Activated CD4-positive, alpha-beta T cell treated with anti-CD3 and anti-CD28 coated beads, Interleukin-2, amount 10 ng/mL, durations not matched to agents 24 days and 14 days (primary cell): ENCODE measurements at regions of chr9 and their contacts with region 1.

Region 1: DNA sequence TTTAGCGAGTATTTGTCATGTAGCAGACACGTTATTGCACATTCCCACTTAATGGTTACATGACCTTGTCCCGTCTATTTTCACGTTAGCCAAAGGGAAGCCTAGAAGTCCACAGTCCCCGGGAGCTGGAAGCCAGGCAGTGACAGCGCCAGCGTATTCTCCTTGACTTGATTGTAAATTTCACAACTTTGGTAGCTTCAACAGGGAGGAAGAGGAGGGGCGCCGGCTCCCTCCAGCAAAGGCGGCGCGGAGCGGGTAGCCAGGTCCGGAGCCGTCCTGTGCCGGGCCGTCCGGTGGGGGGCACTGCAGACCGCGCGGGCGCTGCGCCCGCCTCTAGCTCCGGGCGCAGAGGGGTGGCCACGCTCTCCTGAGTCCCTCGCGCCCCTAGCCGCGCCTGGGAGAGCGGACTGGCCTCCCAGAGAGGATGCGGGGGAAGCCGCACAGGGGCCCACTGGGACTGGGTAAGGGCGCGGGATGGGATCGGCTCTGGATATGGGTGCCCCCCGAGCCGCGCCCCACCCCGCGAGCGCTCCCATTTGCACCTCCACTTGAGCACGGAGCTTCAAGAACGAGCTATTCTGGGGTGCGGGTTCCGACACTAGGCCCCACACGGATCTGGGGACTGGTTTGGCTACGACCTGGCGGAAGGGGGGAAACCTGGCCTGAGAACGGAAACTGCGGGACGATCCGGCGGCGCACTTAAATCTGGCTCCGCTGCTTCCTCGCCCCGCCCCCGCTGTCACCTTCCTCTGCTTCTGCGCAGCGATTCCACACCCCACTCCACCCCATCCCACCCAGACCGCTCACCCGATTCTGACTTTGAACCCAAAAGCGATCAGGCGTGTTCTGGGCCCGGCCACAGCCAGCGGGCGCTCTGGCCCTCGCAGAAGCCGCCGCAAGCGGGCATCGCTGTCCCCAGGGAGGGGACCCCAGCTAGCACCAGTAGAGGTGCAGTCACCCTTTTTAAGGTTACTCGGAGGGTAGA is 23.8 kb downstream of the KLF4 start:
- DNase-seq: peak; percentile 70
- H3K4me3 Mint-ChIP-seq: peak overlapping the region; percentile 54
- H3K27ac Mint-ChIP-seq: no peak overlapping the region
- H3K4me1 Mint-ChIP-seq: no peaks in the 10 kb centered on the region
- H3K27me3 Mint-ChIP-seq: peaks cover 34% of the 10 kb centered on the region

Region 2: DNA sequence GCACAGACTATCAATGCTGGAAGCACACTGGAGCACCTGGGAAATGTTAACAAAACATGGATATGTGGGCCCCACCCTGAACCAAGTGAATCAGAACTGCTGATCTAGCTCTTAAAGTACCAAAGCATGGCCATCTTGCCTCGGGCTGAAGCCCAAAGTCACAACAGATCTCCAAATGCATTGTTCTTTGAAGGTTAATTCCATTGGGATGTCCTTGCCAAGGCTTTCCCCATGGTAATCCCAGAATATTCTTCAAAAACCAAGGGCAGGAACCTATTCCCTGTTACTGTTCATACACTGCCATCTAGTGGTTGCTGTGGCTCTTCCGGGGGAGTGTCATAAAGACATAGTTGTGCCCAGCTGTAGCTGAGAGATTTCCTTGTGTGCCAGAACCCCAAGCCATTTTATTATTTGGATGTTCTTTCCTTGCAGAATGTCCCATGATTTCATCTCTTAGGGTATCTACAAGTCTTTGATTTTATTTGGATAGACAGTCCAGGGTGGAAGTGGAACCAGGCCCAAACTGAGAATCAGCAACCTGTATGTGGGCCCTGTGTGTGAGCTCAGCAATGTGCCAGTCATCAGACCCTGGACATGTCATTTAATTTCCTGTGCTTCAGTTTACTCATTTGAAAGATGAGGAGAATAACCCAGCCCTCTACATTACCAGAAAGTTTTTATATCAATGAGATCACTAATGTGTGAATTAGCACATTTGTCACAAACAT is 1100.1 kb after region 1 on chr9:
- intact Hi-C with region 1: loop called (anchors 5 kb)
- DNase-seq: peak; percentile 68
- H3K4me3 Mint-ChIP-seq: no peak overlapping the region
- H3K27ac Mint-ChIP-seq: no peak overlapping the region
- H3K4me1 Mint-ChIP-seq: no peaks in the 10 kb centered on the region
- H3K27me3 Mint-ChIP-seq: no peaks in the 10 kb centered on the region